B cell (primary cell): ENCODE measurements at regions of chr11 and their contacts with region 1.

Region 1: DNA sequence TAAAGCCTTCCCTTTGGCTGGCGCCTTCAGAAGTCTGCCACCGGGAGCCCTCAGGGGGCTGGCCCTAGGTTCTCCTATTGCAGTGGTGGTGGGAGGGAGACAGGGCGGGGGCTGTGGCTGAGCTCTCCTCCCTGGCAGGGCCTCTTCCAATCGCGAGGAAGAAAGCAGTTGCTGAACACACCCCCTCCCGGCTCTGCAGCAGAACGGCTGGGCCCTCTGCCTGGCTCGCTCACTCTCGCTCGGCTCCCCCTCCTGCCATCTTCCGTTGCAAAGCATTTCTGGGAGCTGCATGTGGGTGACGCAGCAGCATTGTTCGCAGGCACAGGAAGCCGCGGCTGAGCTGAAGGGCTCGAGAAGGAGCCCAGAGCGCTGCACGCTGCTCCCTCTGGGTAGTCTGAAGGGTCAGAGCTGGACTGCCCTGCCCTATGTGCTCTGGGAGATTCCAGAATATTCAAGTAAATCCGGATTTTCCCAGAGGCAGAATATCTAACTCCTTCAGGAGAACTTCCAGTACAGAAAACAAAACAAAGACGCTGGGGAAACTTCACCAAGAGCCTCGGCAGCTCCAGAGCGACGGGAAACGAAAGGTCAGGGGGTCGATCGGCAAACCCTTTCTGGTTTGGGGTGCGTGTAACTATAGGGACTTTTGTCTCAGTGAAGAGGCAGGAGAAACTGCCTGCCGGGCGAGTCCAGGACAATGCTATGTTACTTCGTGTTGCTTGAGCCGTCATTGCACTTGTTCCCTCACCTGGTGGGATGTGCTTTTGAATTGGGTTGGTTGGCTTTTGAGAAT is 26.3 kb upstream of the GRK2 start:
- DNase-seq: peak; percentile 96
- ATAC-seq: peak; percentile 94
- H3K4me3 ChIP-seq: peak overlapping the region; percentile 71 to 99 (median 82)
- H3K4me3 Mint-ChIP-seq: peak overlapping the region; percentile 96
- H3K27ac ChIP-seq: peak overlapping the region; percentile 86 to 91
- H3K27ac Mint-ChIP-seq: peak overlapping the region; percentile 99
- H3K4me1 ChIP-seq: peaks cover 26 to 34% of the 10 kb centered on the region in 2 donors
- H3K4me1 Mint-ChIP-seq: peaks cover 43% of the 10 kb centered on the region
- H3K27me3 ChIP-seq: no peaks in the 10 kb centered on the region
- H3K27me3 Mint-ChIP-seq: no peaks in the 10 kb centered on the region
- CTCF ChIP-seq: no peak

Region 2: DNA sequence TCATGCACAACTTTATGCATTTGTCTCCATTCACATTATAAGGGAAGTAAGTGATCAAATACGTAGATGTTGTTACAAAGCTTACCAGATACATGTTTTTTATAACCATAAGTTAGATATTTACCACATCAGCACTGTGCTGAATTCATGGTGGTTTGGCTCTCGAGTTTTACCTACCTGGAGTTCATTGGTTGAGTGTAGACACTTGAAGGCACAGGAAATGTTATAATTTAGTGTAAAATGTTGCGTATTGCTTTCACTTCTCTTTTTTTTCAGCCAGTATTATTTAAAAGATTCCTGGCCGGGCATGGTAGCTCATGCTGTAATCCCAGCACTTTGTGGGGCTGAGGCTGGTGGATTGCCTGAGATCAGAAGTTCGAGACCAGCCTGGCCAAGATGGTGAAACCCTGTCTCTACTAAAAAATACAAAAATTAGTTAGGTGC is 26.8 kb before region 1 on chr11:
- CTCF ChIA-PET with region 1: interaction called, 8 read pairs
- POLR2A ChIA-PET with region 1: no interaction called
- intact Hi-C with region 1: loop called (anchors 2 kb)
- DNase-seq: peak; percentile 70
- ATAC-seq: peak; percentile 94
- H3K4me3 ChIP-seq: no peak overlapping the region
- H3K4me3 Mint-ChIP-seq: peak overlapping the region; percentile 60
- H3K27ac ChIP-seq: no peak overlapping the region
- H3K27ac Mint-ChIP-seq: peak overlapping the region; percentile 47
- H3K4me1 ChIP-seq: peaks cover 18 to 20% of the 10 kb centered on the region in 2 donors
- H3K4me1 Mint-ChIP-seq: peaks cover 16% of the 10 kb centered on the region
- H3K27me3 ChIP-seq: no peaks in the 10 kb centered on the region
- H3K27me3 Mint-ChIP-seq: no peaks in the 10 kb centered on the region
- CTCF ChIP-seq: no peak

Region 3: DNA sequence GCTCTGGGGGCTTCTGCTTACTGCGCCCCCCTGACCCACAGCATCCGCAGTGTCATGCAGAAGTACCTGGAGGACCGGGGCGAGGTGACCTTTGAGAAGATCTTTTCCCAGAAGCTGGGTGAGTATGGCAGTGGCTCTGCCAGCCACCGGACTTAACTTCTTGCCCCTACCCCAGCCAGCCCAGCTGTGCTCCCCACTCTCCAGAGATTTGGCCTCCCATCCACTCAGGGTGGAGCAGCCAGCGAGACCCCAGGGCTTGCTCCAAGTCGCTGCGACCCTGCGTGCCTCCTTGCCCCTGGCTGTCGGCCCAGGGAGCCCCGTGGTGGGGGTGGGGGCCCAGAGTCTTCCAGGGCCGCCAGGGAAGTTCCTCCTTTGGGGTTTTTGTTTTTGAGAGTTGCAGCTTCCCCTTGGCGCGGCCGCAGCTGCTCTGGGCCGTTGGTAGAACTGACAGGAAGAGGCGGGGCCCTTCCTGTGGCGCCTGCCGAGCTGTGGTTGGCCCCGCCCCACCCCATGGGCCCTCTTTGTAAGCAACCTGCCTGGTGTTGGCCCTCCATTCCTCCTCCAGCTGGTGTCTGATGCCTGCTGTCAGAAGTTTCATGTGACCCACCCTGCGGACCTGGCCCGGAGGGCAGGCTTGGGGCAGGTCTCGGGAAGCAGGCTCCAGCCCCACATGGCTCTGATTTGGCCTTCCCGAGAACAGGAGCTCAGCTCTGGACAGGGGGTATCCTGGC is 37.4 kb after region 1 on chr11:
- CTCF ChIA-PET with region 1: no interaction called
- POLR2A ChIA-PET with region 1: interaction called, 10 read pairs
- intact Hi-C with region 1: loop called (anchors 1 kb)
- DNase-seq: peak; percentile 96
- ATAC-seq: peak; percentile 95
- H3K4me3 ChIP-seq: peak overlapping the region; percentile 35 to 59 (median 50)
- H3K4me3 Mint-ChIP-seq: peak overlapping the region; percentile 84
- H3K27ac ChIP-seq: peak overlapping the region; percentile 82
- H3K27ac Mint-ChIP-seq: peak overlapping the region; percentile 95
- H3K4me1 ChIP-seq: peaks cover 82 to 86% of the 10 kb centered on the region in 2 donors
- H3K4me1 Mint-ChIP-seq: peaks cover 76% of the 10 kb centered on the region
- H3K27me3 ChIP-seq: no peaks in the 10 kb centered on the region
- H3K27me3 Mint-ChIP-seq: no peaks in the 10 kb centered on the region
- CTCF ChIP-seq: no peak

Region 4: GRCh38 chr11:67317205-67317887 is 77.4 kb after region 1 on chr11:
- CTCF ChIA-PET with region 1: interaction called, 6 read pairs
- POLR2A ChIA-PET with region 1: interaction called, 5 read pairs
- intact Hi-C with region 1: loop called (anchors 1 kb)
- DNase-seq: peak; percentile 99
- ATAC-seq: peak; percentile 83
- H3K4me3 ChIP-seq: peak overlapping the region; percentile 77 to 92 (median 87)
- H3K4me3 Mint-ChIP-seq: peak overlapping the region; percentile 89
- H3K27ac ChIP-seq: peak overlapping the region; percentile 46 to 78
- H3K27ac Mint-ChIP-seq: peak overlapping the region; percentile 97
- H3K4me1 ChIP-seq: peaks cover 22 to 33% of the 10 kb centered on the region in 2 donors
- H3K4me1 Mint-ChIP-seq: peaks cover 21% of the 10 kb centered on the region
- H3K27me3 ChIP-seq: no peaks in the 10 kb centered on the region
- H3K27me3 Mint-ChIP-seq: no peaks in the 10 kb centered on the region
- CTCF ChIP-seq: peak; percentile 81

Region 5: DNA sequence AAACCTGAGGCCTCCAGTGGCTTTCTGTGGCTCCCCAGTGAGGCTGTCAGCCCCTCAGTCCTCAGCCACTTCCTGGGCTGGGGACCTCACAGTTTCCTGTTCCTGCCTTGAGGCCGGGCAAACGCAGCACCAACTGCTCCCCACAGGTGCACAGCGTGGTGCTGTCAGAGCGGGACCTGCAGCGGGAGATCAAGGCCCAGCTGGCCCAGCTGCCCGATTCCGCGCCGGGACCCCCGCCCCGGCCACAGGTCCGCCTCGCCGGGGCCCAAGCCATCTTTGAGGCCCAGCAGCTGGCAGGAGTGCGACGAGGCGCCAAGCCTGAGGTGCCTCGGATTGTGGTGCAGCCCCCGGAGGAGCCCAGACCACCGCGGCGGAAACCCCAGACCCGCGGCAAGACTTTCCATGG is 169.3 kb after region 1 on chr11:
- CTCF ChIA-PET with region 1: no interaction called
- POLR2A ChIA-PET with region 1: no interaction called
- intact Hi-C with region 1: no loop called
- DNase-seq: peak; percentile 82
- ATAC-seq: peak; percentile 55
- H3K4me3 ChIP-seq: peak overlapping the region in 4 of 5 experiments; percentile 40 to 80 (median 56)
- H3K4me3 Mint-ChIP-seq: peak overlapping the region; percentile 91
- H3K27ac ChIP-seq: peak overlapping the region; percentile 83 to 88
- H3K27ac Mint-ChIP-seq: peak overlapping the region; percentile 100
- H3K4me1 ChIP-seq: peaks cover 92 to 99% of the 10 kb centered on the region in 2 donors
- H3K4me1 Mint-ChIP-seq: peaks cover 91% of the 10 kb centered on the region
- H3K27me3 ChIP-seq: no peaks in the 10 kb centered on the region
- H3K27me3 Mint-ChIP-seq: no peaks in the 10 kb centered on the region
- CTCF ChIP-seq: no peak

Region 6: GRCh38 chr11:67457453-67457852 is 217.5 kb after region 1 on chr11:
- CTCF ChIA-PET with region 1: no interaction called
- POLR2A ChIA-PET with region 1: no interaction called
- intact Hi-C with region 1: no loop called
- DNase-seq: no peak
- ATAC-seq: no peak
- H3K4me3 ChIP-seq: no peak overlapping the region
- H3K4me3 Mint-ChIP-seq: peak overlapping the region; percentile 32
- H3K27ac ChIP-seq: peak overlapping the region in 1 of 2 donors; percentile 24
- H3K27ac Mint-ChIP-seq: peak overlapping the region; percentile 92
- H3K4me1 ChIP-seq: peaks cover 51 to 86% of the 10 kb centered on the region in 2 donors
- H3K4me1 Mint-ChIP-seq: peaks cover 42% of the 10 kb centered on the region
- H3K27me3 ChIP-seq: no peaks in the 10 kb centered on the region
- H3K27me3 Mint-ChIP-seq: no peaks in the 10 kb centered on the region
- CTCF ChIP-seq: no peak

Region 7: DNA sequence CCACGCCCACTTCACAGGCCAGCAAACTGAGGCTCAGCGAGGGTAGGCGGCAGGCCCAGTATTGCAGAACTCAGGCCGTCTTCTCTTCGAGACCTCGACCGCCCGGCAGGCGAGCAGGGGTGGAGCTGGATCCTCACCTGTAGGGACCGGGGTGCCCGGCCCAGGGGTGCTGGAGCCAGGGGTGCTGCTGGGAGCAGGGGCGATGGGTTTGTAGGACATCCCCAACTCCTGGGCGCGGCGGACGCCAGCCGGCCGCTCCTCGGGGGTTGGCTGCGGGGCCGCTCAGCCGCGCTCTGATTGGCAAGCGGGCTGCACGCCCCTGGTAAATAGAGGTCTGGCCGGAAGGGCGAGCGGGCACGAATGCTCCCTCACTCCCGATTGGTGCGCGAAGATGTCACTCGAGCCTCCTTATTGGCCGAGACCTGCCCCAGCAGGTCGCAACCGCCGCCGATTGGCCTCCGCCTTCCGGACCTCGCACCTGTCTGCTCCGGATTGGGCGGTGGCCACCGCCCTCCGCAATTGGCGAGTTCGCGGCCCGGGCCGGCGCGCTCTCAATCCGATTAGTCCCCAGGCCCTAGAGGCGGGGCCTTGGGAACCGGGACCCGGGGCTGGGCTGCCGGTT is 268.0 kb after region 1 on chr11 and contains the start of gene CDK2AP2:
- CTCF ChIA-PET with region 1: no interaction called
- POLR2A ChIA-PET with region 1: interaction called, 3 read pairs
- intact Hi-C with region 1: loop called (anchors 5 kb)
- DNase-seq: peak; percentile 100
- ATAC-seq: peak; percentile 74
- H3K4me3 ChIP-seq: peak within 1 kb of the TSS; percentile 57 to 88 (median 79)
- H3K4me3 Mint-ChIP-seq: peak within 1 kb of the TSS; percentile 92
- H3K27ac ChIP-seq: peak within 1 kb of the TSS; percentile 84 to 98
- H3K27ac Mint-ChIP-seq: peak within 1 kb of the TSS; percentile 95
- H3K4me1 ChIP-seq: peaks cover 39 to 46% of the 10 kb centered on the region in 2 donors
- H3K4me1 Mint-ChIP-seq: peaks cover 42% of the 10 kb centered on the region
- H3K27me3 ChIP-seq: peaks cover 0 to 16% (median 4%) of the 10 kb centered on the region in 4 experiments
- H3K27me3 Mint-ChIP-seq: peaks cover 8% of the 10 kb centered on the region
- CTCF ChIP-seq: no peak
- total RNA-seq, gene CDK2AP2: 50.3 and 62.7 TPM in 2 replicates